ENCODE measurements at regions of chr12 and their contacts with region 1.

Region 1: DNA sequence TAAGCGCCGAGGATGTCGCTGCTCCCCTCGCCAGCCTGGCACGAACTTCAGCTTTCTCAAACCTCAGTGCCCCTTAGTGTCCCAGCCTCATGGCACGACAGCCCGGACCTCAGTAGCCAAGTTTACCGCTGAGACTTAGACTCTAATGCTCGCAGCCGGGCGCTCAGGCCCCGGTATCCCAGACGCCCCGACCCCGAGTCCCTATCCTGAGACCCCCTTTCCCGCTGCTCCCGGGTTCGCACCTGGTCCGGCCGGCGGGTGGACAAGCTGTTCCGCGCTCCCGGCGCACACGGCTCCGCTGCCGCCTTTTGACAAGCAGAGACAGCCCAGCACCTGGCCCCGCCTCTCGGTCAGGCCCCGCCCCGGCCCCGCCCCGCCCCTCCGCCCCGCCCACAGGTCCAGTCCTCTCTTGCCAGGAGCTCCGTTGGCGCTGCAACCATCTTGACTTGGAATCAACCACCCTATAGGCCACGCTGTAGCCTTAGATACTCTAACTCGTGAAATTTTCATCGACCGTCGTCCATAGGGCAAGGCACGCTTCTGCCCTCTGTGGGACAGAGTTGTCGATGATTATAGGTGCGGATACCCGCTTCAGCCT is at the start of gene VDR:
- DNase-seq: peak; percentile 79 to 85
- H3K4me3 ChIP-seq: peak within 1 kb of the TSS; percentile 56 to 76 (median 60)
- H3K27ac ChIP-seq: peak within 1 kb of the TSS; percentile 84 to 87
- H3K4me1 ChIP-seq: peaks cover 0 to 19% of the 10 kb centered on the region in 2 donors
- H3K27me3 ChIP-seq: no peaks in the 10 kb centered on the region
- CTCF ChIP-seq: peak in 1 of 3 donors; percentile 7
- POLR2A ChIP-seq: no peak
- total RNA-seq, gene VDR: 1.6 to 41.7 (median 16.1) TPM

Region 2: DNA sequence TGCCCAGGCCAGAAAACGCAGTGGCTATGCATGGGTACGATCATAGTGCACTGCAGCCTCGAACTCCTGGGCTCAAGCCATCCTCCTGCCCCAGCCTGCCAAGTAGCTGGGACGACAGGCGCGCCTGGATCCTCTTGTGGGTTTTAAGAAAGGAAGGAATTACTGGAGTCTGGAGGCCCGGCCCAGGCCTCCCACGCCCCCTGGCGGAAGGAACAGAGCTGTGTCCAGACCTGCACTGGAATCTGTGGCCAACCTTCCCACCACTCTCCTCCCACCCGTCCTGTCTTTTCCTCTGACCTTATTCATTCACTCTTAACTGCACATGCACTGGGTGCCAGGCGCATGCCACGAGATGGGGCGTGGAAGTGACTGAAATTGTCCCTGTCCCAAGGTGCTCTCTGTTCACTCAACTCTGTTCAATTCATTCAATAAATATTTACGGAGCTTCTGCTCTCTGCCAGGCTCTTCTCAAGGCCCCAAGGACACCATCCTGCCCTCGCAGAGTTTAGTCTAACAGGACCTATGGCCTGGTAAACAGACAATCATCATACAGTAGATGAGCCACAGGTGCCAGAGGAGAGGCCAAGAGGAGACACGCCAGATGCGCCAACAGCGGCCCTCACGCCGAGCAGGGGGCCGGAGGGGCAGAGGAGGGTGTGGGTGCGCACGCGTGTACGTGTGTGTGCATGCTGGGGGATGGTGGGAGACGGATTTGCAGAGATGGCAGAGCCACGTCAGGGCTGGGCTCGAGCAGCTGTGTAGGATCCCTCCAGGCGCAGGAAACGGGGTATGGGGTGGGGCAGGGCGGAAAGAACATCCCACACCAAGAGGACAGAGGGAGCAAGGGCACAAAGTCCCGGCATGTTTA is 44.9 kb after region 1 on chr12:
- intact Hi-C with region 1: loop called (anchors 10 kb)
- DNase-seq: peak; percentile 83 to 85
- H3K4me3 ChIP-seq: no peak overlapping the region
- H3K27ac ChIP-seq: peak overlapping the region; percentile 55 to 60
- H3K4me1 ChIP-seq: peaks cover 10 to 15% of the 10 kb centered on the region in 2 donors
- H3K27me3 ChIP-seq: no peaks in the 10 kb centered on the region
- CTCF ChIP-seq: peak; percentile 69 to 91 (median 84)
- POLR2A ChIP-seq: no peak